CD8-positive, alpha-beta T cell (primary cell): ENCODE measurements at regions of chr6 and their contacts with region 1.

Region 1: DNA sequence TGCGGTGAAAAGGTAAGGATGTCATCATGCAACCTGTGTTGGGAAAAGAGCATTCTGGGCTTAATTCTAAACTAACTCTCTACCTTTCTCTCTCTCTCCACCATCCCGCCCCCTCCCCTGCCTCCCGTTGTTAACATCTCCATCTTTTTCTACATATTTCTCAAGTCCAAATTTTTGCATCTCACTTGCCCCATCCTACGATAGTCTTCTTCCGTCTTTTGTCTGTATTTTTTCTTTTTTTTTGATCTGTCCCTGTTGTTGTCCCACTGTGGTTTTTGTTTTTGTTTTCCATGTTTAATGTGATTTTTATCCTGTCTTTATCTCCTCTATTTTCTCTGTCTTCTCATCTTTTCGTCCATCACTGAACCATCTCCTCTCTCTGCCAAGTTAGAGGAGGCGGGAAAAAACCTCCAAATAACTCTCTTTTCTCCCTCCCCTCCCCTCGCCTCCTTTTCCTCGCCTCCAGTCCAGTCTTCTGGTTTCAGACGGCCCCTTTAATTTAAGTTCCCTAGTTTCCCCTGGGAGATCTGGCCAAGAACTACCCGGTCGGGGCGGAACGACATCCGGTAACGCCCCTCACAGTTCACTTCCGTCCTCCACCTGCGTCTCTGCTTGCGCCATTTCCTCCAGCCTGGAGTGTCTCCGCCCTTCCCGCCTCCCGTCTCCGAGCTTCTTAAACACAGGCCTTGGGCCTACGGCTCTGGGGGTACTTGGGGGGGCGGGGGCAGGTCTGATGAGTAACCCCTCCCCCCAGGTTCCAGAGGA is at the start of gene NFKBIL1:
- DNase-seq: peak; percentile 78 to 97 (median 89)
- ATAC-seq: peak; percentile 80
- H3K4me3 ChIP-seq: peak within 1 kb of the TSS; percentile 53 to 54
- H3K4me3 Mint-ChIP-seq: peak within 1 kb of the TSS; percentile 79
- H3K27ac ChIP-seq: peak within 1 kb of the TSS; percentile 55 to 89
- H3K27ac Mint-ChIP-seq: peak within 1 kb of the TSS; percentile 90
- H3K4me1 ChIP-seq: peaks cover 31% of the 10 kb centered on the region
- H3K4me1 Mint-ChIP-seq: peaks cover 46% of the 10 kb centered on the region
- H3K27me3 ChIP-seq: no peaks in the 10 kb centered on the region
- H3K27me3 Mint-ChIP-seq: no peaks in the 10 kb centered on the region
- CTCF ChIP-seq: peak; percentile 40
- total RNA-seq, gene NFKBIL1: 6.1 to 7.0 TPM

Region 2: DNA sequence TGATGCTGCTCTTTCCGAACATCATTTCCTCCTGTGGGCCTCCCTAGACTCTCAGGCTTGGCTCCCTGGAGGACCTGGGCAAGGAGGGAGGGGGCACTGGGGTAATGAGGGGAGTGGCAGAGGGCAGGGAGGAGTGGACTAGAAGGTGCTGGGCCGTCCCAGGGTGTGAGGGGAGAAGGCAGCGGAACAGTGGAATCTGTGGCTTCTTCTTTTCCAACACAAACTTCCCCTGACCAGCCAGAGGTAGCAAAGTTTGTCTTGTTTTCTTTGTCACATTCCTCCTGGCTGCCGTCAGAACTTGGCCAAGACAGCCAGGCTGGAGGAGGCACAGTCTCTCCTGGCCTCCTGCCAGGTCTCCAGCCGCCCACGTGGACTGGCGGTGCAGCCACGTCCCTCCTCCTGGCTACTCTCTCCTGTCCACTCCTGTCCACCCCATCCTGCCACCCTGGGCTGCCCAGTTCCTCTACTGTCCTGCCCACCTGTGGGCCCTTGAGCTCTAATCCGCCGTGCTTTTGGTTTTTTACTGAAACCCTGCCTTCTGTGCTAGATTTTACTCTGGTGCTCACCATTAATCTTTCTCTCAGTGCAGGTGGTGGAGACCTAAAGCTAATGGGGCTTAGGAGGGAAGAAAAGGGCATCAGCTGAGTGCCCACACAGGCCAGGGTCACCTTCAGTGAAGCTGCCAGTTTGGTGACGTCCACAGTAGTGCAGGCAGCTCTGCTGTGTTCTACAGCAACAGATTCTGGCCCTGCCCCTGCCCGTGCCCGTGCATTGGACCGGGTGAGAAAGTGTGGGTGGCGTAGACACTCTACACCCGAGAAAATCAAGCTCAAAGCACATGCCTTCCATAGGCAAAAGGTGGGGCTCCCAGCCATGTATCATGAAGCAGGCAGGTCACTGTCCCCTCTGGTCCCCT is 424.1 kb before region 1 on chr6:
- CTCF ChIA-PET with region 1: no interaction called
- POLR2A ChIA-PET with region 1: no interaction called
- intact Hi-C with region 1: no loop called
- DNase-seq: no peak
- ATAC-seq: no peak
- H3K4me3 ChIP-seq: no peak overlapping the region
- H3K4me3 Mint-ChIP-seq: no peak overlapping the region
- H3K27ac ChIP-seq: no peak overlapping the region
- H3K27ac Mint-ChIP-seq: no peak overlapping the region
- H3K4me1 ChIP-seq: no peaks in the 10 kb centered on the region
- H3K4me1 Mint-ChIP-seq: peaks cover 4% of the 10 kb centered on the region
- H3K27me3 ChIP-seq: no peaks in the 10 kb centered on the region
- H3K27me3 Mint-ChIP-seq: peaks cover 5% of the 10 kb centered on the region
- CTCF ChIP-seq: no peak

Region 3: GRCh38 chr6:31493875-31494694 is 53.1 kb before region 1 on chr6:
- CTCF ChIA-PET with region 1: interaction called, 30 read pairs
- POLR2A ChIA-PET with region 1: interaction called, 41 read pairs
- intact Hi-C with region 1: loop called in 1 of 2 experiments (anchors 1 kb)
- DNase-seq: peak; percentile 62 to 90 (median 76)
- ATAC-seq: peak; percentile 32
- H3K4me3 ChIP-seq: peak overlapping the region; percentile 65 to 81
- H3K4me3 Mint-ChIP-seq: peak overlapping the region; percentile 77
- H3K27ac ChIP-seq: peak overlapping the region; percentile 29 to 71
- H3K27ac Mint-ChIP-seq: peak overlapping the region; percentile 91
- H3K4me1 ChIP-seq: peaks cover 41% of the 10 kb centered on the region
- H3K4me1 Mint-ChIP-seq: peaks cover 49% of the 10 kb centered on the region
- H3K27me3 ChIP-seq: no peaks in the 10 kb centered on the region
- H3K27me3 Mint-ChIP-seq: no peaks in the 10 kb centered on the region
- CTCF ChIP-seq: peak; percentile 83

Region 4: GRCh38 chr6:31568537-31568961 is 21.4 kb after region 1 on chr6:
- CTCF ChIA-PET with region 1: interaction called, 448 read pairs
- POLR2A ChIA-PET with region 1: interaction called, 3 read pairs
- intact Hi-C with region 1: loop called in 1 of 2 experiments (anchors 1 kb)
- DNase-seq: peak in 8 of 9 experiments; percentile 38 to 96 (median 66)
- ATAC-seq: peak; percentile 55
- H3K4me3 ChIP-seq: no peak overlapping the region
- H3K4me3 Mint-ChIP-seq: peak overlapping the region; percentile 44
- H3K27ac ChIP-seq: peak overlapping the region; percentile 11 to 90
- H3K27ac Mint-ChIP-seq: peak overlapping the region; percentile 93
- H3K4me1 ChIP-seq: peaks cover 60% of the 10 kb centered on the region
- H3K4me1 Mint-ChIP-seq: peaks cover 69% of the 10 kb centered on the region
- H3K27me3 ChIP-seq: no peaks in the 10 kb centered on the region
- H3K27me3 Mint-ChIP-seq: no peaks in the 10 kb centered on the region
- CTCF ChIP-seq: no peak

Region 5: DNA sequence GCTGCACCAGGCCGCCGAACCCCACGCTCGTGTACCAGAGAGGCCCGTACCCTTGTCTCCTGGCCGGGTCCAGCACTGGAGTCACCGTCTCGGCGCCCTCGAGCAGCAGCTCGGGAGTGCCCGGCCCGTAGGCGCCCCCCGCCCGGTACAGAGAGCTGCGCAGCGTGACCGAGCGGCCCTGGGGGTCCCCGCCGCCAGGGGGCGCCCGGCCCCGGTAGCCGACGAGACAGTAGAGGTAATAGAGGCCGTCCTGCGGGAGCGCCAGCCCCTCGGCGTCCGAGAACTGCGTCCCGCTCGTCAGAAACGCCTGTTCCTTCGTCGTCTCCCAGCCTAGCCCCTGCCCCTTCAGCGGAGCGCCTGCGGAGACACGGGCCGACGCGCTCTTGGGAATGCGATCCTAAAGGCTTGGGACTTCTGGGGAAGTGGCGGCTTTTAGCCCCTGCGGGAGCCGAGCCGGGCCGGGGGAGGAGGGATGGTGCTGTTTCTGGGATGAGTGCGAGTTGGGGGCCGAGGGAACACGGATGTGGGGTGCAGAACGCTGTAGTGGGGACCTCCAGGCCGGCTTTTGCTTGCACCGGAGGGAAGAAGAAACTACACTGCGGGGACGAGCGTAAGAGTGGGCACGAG is 33.8 kb after region 1 on chr6:
- CTCF ChIA-PET with region 1: interaction called, 448 read pairs
- POLR2A ChIA-PET with region 1: interaction called, 29 read pairs
- intact Hi-C with region 1: loop called (anchors 1 kb)
- DNase-seq: peak; percentile 81 to 97 (median 90)
- ATAC-seq: peak; percentile 73
- H3K4me3 ChIP-seq: peak overlapping the region; percentile 92 to 100
- H3K4me3 Mint-ChIP-seq: peak overlapping the region; percentile 99
- H3K27ac ChIP-seq: peak overlapping the region; percentile 77 to 91
- H3K27ac Mint-ChIP-seq: peak overlapping the region; percentile 96
- H3K4me1 ChIP-seq: peaks cover 69% of the 10 kb centered on the region
- H3K4me1 Mint-ChIP-seq: peaks cover 77% of the 10 kb centered on the region
- H3K27me3 ChIP-seq: no peaks in the 10 kb centered on the region
- H3K27me3 Mint-ChIP-seq: no peaks in the 10 kb centered on the region
- CTCF ChIP-seq: peak; percentile 98

Region 6: GRCh38 chr6:31619805-31620585 is 72.9 kb after region 1 on chr6:
- CTCF ChIA-PET with region 1: interaction called, 9 read pairs
- POLR2A ChIA-PET with region 1: interaction called, 7 read pairs
- intact Hi-C with region 1: loop called (anchors 1 kb)
- DNase-seq: peak; percentile 94 to 99 (median 96)
- ATAC-seq: peak; percentile 80
- H3K4me3 ChIP-seq: peak overlapping the region; percentile 83 to 96
- H3K4me3 Mint-ChIP-seq: peak overlapping the region; percentile 91
- H3K27ac ChIP-seq: peak overlapping the region; percentile 95 to 99
- H3K27ac Mint-ChIP-seq: peak overlapping the region; percentile 96
- H3K4me1 ChIP-seq: peaks cover 37% of the 10 kb centered on the region
- H3K4me1 Mint-ChIP-seq: peaks cover 52% of the 10 kb centered on the region
- H3K27me3 ChIP-seq: no peaks in the 10 kb centered on the region
- H3K27me3 Mint-ChIP-seq: no peaks in the 10 kb centered on the region
- CTCF ChIP-seq: no peak

Region 7: GRCh38 chr6:31665501-31666336 is 118.6 kb after region 1 on chr6 and contains the start of gene CSNK2B:
- CTCF ChIA-PET with region 1: no interaction called
- POLR2A ChIA-PET with region 1: no interaction called
- intact Hi-C with region 1: loop called (anchors 1 kb)
- DNase-seq: peak; percentile 95 to 99 (median 98)
- ATAC-seq: peak; percentile 84
- H3K4me3 ChIP-seq: peak within 1 kb of the TSS; percentile 91 to 94
- H3K4me3 Mint-ChIP-seq: peak within 1 kb of the TSS; percentile 95
- H3K27ac ChIP-seq: peak within 1 kb of the TSS; percentile 96 to 99
- H3K27ac Mint-ChIP-seq: peak within 1 kb of the TSS; percentile 98
- H3K4me1 ChIP-seq: peaks cover 44% of the 10 kb centered on the region
- H3K4me1 Mint-ChIP-seq: peaks cover 56% of the 10 kb centered on the region
- H3K27me3 ChIP-seq: no peaks in the 10 kb centered on the region
- H3K27me3 Mint-ChIP-seq: no peaks in the 10 kb centered on the region
- CTCF ChIP-seq: no peak
- total RNA-seq, gene CSNK2B: 80.9 to 86.1 TPM

Region 8: DNA sequence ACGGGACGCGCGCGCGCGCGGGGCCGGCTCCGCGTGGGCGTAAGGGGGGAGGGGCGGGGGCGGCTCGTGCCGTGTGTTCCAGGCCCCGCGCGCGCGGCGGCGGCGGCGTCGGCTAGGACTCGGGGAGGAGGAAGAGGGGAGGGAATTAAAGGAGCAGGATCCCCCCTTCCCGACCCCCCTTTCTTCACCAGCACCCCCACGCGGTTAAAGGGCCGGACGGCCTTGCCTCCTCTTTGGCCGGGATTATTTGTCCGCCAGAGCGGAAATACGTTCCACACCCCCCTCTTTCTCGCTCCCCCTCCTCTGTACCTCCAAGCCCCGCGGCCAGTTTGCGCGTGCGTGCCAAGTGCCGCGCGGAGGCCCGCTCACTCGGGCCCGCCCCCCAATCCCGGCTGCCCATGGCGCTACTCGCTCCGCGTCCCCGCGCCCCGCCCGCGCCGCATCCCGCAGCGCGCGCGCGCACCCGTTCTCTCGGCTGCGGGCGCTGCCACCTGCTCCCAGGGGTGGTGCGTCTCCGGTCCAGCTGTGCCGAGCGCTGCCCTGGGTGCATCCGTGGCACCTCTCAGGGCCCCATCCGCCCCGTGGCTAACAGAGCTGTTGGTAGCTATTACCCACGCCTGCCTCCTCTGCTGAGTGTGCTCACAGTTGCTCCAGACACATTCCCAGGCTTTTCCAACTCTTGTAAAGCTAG is 355.0 kb after region 1 on chr6 and contains the start of gene ZBTB12:
- CTCF ChIA-PET with region 1: no interaction called
- POLR2A ChIA-PET with region 1: no interaction called
- intact Hi-C with region 1: loop called (anchors 2 to 5 kb)
- DNase-seq: peak; percentile 68 to 94 (median 84)
- ATAC-seq: peak; percentile 54
- H3K4me3 ChIP-seq: peak within 1 kb of the TSS; percentile 70 to 97
- H3K4me3 Mint-ChIP-seq: peak within 1 kb of the TSS; percentile 89
- H3K27ac ChIP-seq: peak within 1 kb of the TSS; percentile 47 to 76
- H3K27ac Mint-ChIP-seq: peak within 1 kb of the TSS; percentile 77
- H3K4me1 ChIP-seq: peaks cover 30% of the 10 kb centered on the region
- H3K4me1 Mint-ChIP-seq: peaks cover 32% of the 10 kb centered on the region
- H3K27me3 ChIP-seq: no peaks in the 10 kb centered on the region
- H3K27me3 Mint-ChIP-seq: no peaks in the 10 kb centered on the region
- CTCF ChIP-seq: no peak
- total RNA-seq, gene ZBTB12: 0.27 TPM in 1 of 2 experiments, not detected in the other

Region 9: DNA sequence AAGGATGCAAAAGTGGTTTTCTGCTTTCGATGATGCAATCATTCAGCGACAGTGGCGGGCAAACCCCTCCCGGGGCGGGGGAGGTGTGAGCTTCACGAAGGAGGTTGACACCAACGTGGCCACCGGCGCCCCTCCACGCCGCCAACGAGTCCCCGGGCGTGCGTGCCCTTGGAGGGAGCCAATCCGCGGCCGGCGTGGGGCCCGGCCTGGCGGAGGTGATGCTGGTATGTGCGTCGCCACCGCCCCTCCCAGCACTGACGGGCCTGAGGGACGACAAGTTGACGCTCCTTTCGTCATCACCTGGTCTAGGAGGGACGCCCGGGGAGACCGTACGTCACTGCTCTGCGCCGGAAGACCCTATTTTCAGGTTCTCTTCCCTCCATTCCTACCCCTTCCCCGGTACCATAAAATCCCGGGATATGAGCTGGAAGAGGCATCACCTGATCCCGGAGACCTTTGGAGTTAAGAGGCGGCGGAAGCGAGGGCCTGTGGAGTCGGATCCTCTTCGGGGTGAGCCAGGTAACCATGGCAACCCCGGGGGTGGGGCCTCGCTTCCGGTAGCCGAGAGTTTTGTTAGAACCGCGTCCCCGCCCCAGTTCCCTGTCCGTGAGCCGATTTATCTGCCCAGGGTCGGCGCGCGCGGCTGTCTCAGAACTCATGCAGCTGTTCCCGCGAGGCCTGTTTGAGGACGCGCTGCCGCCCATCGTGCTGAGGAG is 425.0 kb after region 1 on chr6 and contains the start of gene DXO:
- CTCF ChIA-PET with region 1: no interaction called
- POLR2A ChIA-PET with region 1: no interaction called
- intact Hi-C with region 1: no loop called
- DNase-seq: peak; percentile 91 to 100 (median 97)
- ATAC-seq: peak; percentile 93
- H3K4me3 ChIP-seq: peak within 1 kb of the TSS; percentile 66 to 90
- H3K4me3 Mint-ChIP-seq: peak within 1 kb of the TSS; percentile 96
- H3K27ac ChIP-seq: peak within 1 kb of the TSS; percentile 98 to 99
- H3K27ac Mint-ChIP-seq: peak within 1 kb of the TSS; percentile 100
- H3K4me1 ChIP-seq: peaks cover 22% of the 10 kb centered on the region
- H3K4me1 Mint-ChIP-seq: peaks cover 37% of the 10 kb centered on the region
- H3K27me3 ChIP-seq: no peaks in the 10 kb centered on the region
- H3K27me3 Mint-ChIP-seq: no peaks in the 10 kb centered on the region
- CTCF ChIP-seq: no peak
- total RNA-seq, gene DXO: 20.8 to 22.2 TPM